IMR-90 (cell line): ENCODE measurements at regions of chr15 and their contacts with region 1.

Region 1: GRCh38 chr15:43792761-43793476 is 799 bp downstream of the SERF2 start:
- DNase-seq: peak; percentile 34
- ATAC-seq: peak; percentile 0
- H3K4me3 ChIP-seq: peak overlapping the region; percentile 71
- H3K27ac ChIP-seq: peak overlapping the region; percentile 95
- H3K4me1 ChIP-seq: peaks cover 21% of the 10 kb centered on the region
- H3K27me3 ChIP-seq: no peaks in the 10 kb centered on the region
- CTCF ChIP-seq: peak; percentile 22; the same call in 1 of the 2 replicates
- POLR2A ChIP-seq: no peak; the same call in 1 of the 2 replicates
- RAD21 ChIP-seq: no peak

Region 2: DNA sequence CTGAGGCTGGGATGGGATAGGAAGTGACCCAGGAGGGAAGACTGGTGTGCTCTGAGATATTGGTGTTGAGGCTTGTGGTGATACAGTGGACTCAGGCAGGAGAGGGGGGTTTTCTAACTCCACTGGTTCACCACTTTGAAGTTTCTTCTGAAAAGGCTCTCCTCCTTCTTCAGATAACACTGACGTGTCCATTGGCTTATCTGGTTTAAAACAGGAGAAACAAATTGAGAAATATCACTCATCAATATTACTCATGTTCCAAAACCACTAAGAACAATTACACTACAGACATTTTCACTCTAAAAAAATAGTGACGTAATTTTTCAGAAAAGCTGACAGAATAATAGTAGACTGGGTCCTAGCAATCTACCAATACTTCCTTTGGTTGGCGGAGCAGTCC is 323.1 kb before region 1 on chr15:
- CTCF ChIA-PET with region 1: no interaction called
- POLR2A ChIA-PET with region 1: no interaction called
- dilution Hi-C with region 1: no loop called
- in situ Hi-C with region 1: no loop called
- intact Hi-C with region 1: no loop called
- DNase-seq: peak; percentile 82
- ATAC-seq: no peak
- H3K4me3 ChIP-seq: no peak overlapping the region
- H3K27ac ChIP-seq: no peak overlapping the region
- H3K4me1 ChIP-seq: peaks cover 17% of the 10 kb centered on the region
- H3K27me3 ChIP-seq: no peaks in the 10 kb centered on the region
- CTCF ChIP-seq: no peak
- POLR2A ChIP-seq: no peak
- RAD21 ChIP-seq: no peak

Region 3: GRCh38 chr15:43749690-43750345 is 43.1 kb before region 1 on chr15:
- CTCF ChIA-PET with region 1: no interaction called
- POLR2A ChIA-PET with region 1: interaction called, 10 read pairs
- dilution Hi-C with region 1: no loop called
- in situ Hi-C with region 1: no loop called
- intact Hi-C with region 1: no loop called
- DNase-seq: no peak
- ATAC-seq: no peak
- H3K4me3 ChIP-seq: no peak overlapping the region
- H3K27ac ChIP-seq: no peak overlapping the region
- H3K4me1 ChIP-seq: peaks cover 7% of the 10 kb centered on the region
- H3K27me3 ChIP-seq: no peaks in the 10 kb centered on the region
- CTCF ChIP-seq: no peak
- POLR2A ChIP-seq: no peak
- RAD21 ChIP-seq: no peak